IMR-90 (cell line): ENCODE measurements at regions of chr13 and their contacts with region 1.

Region 1: DNA sequence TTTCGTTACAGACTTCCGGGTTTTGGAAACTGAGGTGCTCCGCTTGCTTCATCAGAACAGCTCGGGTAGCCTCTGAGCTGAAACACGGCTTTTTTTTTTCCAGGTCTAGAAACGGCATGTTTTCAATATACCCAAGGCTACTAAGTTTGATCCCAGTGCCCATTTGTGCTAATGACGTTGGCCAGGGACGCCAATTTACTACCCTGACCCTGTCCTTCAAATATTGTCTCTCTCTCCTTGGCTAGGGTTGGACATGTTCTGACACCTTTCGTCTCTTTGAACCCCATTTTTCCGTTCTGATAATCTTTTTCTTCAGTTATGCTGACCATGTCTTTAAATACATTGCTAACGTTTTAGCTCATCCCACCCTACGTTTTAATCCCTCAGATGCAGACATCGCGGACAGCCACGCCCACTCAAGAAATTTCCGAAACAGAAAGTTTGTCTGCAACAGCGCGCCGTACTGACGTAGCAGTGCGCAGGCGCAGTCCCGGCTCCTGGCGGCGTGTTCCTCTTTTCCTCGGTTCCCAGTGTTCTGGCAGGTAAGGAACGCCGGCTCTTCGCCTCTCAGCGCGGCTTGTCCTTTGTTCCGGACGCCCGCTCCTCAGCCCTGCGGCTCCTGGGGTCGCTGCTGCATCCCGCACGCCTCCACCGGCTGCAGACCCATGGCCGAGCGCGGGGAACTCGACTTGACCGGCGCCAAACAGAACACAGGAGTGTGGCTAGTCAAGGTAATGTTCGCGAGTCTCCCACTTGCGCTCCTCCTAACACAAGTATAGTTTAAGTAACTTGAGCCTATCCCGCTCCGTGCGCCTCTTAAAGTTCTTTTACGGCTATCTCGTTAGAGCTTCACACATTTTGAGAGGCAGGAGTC is at the start of gene GTF2F2:
- DNase-seq: peak; percentile 90
- ATAC-seq: peak; percentile 89
- H3K4me3 ChIP-seq: peak within 1 kb of the TSS; percentile 70
- H3K27ac ChIP-seq: peak within 1 kb of the TSS; percentile 87
- H3K4me1 ChIP-seq: peaks cover 5% of the 10 kb centered on the region
- H3K27me3 ChIP-seq: no peaks in the 10 kb centered on the region
- CTCF ChIP-seq: no peak
- POLR2A ChIP-seq: peak; percentile 72
- RAD21 ChIP-seq: no peak
- total RNA-seq, gene GTF2F2: 16.5 and 35.6 TPM in 2 replicates

Region 2: DNA sequence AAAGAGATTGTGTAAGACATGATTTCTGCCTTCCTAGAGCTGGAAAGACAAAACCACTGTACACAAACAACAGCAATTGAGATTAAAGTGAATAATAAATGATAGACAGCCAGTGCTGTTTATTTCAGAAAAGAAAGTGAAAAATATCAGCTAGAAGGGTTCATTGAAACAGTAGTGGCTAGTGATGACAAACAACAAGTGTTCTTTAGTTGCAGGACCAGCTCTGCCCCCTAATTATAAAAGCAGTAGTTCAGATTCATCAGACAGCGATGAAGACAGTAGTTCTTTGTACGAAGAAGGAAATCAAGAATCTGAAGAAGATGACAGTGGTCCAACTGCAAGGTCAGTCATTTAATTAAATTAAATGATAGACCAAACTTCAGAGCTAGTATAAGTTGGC is 116.1 kb before region 1 on chr13:
- CTCF ChIA-PET with region 1: no interaction called
- POLR2A ChIA-PET with region 1: no interaction called
- dilution Hi-C with region 1: no loop called
- in situ Hi-C with region 1: no loop called
- intact Hi-C with region 1: no loop called
- DNase-seq: no peak
- ATAC-seq: no peak
- H3K4me3 ChIP-seq: no peak overlapping the region
- H3K27ac ChIP-seq: no peak overlapping the region
- H3K4me1 ChIP-seq: no peaks in the 10 kb centered on the region
- H3K27me3 ChIP-seq: no peaks in the 10 kb centered on the region
- CTCF ChIP-seq: no peak
- POLR2A ChIP-seq: no peak
- RAD21 ChIP-seq: no peak

Region 3: GRCh38 chr13:45047394-45048310 is 72.6 kb before region 1 on chr13:
- CTCF ChIA-PET with region 1: no interaction called
- POLR2A ChIA-PET with region 1: no interaction called
- dilution Hi-C with region 1: no loop called
- in situ Hi-C with region 1: no loop called
- intact Hi-C with region 1: loop called (anchors 1 kb)
- DNase-seq: peak; percentile 86
- ATAC-seq: peak; percentile 89
- H3K4me3 ChIP-seq: peak overlapping the region; percentile 45; the same call in 1 of the 2 replicates
- H3K27ac ChIP-seq: peak overlapping the region; percentile 67; the same call in 1 of the 2 replicates
- H3K4me1 ChIP-seq: peaks cover 6% of the 10 kb centered on the region
- H3K27me3 ChIP-seq: no peaks in the 10 kb centered on the region
- CTCF ChIP-seq: peak; percentile 98
- POLR2A ChIP-seq: peak; percentile 48; the same call in 1 of the 2 replicates
- RAD21 ChIP-seq: peak; percentile 100

Region 4: DNA sequence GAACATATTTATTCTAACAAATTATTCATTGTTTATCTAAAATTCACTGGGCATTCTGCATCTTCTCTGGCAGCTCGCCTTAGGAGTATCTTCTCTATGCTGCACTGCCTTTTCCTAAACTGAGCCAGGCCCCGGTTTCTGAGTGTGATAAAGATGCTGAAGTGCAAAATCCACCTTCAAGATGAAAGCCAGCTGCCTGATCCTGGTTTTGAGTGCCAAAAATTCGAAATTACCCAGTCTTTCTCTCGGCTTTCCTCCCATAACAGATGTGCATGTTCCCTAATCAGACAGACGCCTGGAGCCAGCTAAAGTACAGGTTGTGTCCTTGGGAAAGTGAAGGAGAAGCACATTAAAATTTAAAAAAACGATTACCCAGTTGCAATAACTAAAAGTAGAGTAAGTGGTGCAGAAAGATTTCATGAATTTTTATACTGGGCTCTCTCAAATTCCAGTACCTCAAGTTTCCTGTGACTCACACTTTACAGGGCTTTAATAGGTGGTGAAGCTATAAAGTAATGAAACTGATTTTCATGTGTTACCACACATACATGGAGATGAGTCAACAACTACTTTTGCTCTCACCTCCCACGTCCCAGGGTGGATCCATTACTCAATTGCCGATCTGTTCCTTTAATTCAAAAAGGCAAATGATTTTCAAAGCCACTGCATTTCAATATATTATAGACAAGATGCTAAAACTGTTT is 64.9 kb before region 1 on chr13:
- CTCF ChIA-PET with region 1: no interaction called
- POLR2A ChIA-PET with region 1: no interaction called
- dilution Hi-C with region 1: no loop called
- in situ Hi-C with region 1: no loop called
- intact Hi-C with region 1: loop called (anchors 1 kb)
- DNase-seq: peak; percentile 93
- ATAC-seq: peak; percentile 87
- H3K4me3 ChIP-seq: no peak overlapping the region
- H3K27ac ChIP-seq: peak overlapping the region; percentile 85
- H3K4me1 ChIP-seq: peaks cover 14% of the 10 kb centered on the region
- H3K27me3 ChIP-seq: no peaks in the 10 kb centered on the region
- CTCF ChIP-seq: no peak
- POLR2A ChIP-seq: no peak
- RAD21 ChIP-seq: no peak

Region 5: DNA sequence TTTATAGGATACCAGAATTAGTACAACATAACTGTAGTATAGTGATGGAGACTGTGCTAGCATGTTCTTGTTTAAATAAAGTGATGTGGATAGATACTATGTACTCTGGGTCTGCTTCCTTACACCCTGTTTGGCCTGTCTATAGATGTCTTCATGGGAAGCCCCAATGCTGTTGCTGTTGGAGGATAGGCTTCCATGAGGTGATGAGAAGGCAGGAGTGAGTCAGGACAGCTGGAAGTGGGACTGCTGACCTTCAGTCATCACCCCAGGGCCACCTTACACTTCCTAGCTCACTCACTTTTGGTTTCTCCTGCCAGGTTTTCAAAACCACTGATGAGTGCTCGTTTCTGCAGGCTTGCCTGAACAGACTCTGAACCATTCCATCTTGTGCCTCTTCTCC is 76.4 kb after region 1 on chr13:
- CTCF ChIA-PET with region 1: no interaction called
- POLR2A ChIA-PET with region 1: no interaction called
- dilution Hi-C with region 1: no loop called
- in situ Hi-C with region 1: no loop called
- intact Hi-C with region 1: loop called (anchors 5 kb)
- DNase-seq: peak; percentile 80
- ATAC-seq: peak; percentile 27
- H3K4me3 ChIP-seq: no peak overlapping the region
- H3K27ac ChIP-seq: peak overlapping the region; percentile 51
- H3K4me1 ChIP-seq: peaks cover 7% of the 10 kb centered on the region
- H3K27me3 ChIP-seq: no peaks in the 10 kb centered on the region
- CTCF ChIP-seq: no peak
- POLR2A ChIP-seq: no peak
- RAD21 ChIP-seq: 0 out of 2 replicates have a peak, but pooled peaks have one; percentile 12

Region 6: DNA sequence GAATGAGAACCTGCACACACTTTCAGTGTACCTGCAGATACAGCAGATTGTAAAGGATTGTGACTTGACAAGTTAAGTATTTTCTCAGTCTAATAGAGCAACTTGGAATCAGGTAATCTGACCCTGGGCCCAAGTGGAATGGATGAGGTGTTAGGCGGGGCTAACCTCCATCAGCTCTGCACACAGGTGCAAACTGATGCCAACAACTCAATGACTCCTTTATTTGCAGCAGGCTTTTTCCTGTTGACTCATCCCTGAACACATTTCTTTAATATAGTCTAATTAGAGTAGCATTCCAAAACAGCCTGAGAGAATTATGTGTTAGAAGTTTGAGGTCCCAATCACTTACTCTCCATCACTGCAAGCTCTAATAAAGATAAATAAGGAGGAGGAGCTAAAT is 171.9 kb after region 1 on chr13:
- CTCF ChIA-PET with region 1: no interaction called
- POLR2A ChIA-PET with region 1: no interaction called
- dilution Hi-C with region 1: no loop called
- in situ Hi-C with region 1: no loop called
- intact Hi-C with region 1: no loop called
- DNase-seq: no peak
- ATAC-seq: no peak
- H3K4me3 ChIP-seq: no peak overlapping the region
- H3K27ac ChIP-seq: no peak overlapping the region
- H3K4me1 ChIP-seq: peaks cover 2% of the 10 kb centered on the region
- H3K27me3 ChIP-seq: no peaks in the 10 kb centered on the region
- CTCF ChIP-seq: no peak
- POLR2A ChIP-seq: no peak
- RAD21 ChIP-seq: no peak